GM12878 (cell line): ENCODE measurements at regions of chr3 and their contacts with region 1.

Region 1: DNA sequence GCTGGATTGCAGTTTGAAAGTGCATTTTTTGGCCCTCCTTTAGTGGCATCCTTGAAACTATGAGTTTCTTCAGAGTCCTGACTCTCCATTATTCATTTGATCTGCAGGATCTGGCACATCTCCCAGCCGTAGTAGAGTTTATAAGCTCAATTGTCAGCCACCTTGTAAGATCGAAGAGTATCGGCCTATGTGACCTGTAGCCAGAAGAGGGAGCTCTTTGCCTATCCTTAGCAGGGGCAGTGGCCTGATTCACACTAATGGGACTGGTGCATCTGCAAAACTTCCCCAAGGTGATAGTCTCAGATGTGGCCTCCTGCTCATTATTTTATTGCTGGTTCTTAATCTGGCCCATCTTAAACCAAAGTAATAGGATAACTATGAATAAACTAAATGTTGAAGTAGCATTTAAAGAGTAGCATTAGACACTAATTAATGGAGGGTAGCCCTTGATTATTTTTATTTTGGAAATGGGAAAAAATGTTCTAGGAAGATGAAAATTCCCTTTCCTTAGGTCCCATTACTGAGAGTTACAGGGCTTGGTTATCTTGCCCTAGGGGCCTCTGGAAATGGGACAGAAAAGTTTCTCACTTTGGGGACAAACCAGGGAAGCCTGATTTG is 21.2 kb downstream of the GCSAM start:
- DNase-seq: no peak
- ATAC-seq: peak; percentile 59
- H3K4me3 ChIP-seq: no peak overlapping the region
- H3K27ac ChIP-seq: peak overlapping the region; percentile 95
- H3K4me1 ChIP-seq: peaks cover 46% of the 10 kb centered on the region
- H3K27me3 ChIP-seq: no peaks in the 10 kb centered on the region
- CTCF ChIP-seq: peak; percentile 91 to 98 (median 93); a peak in 5 of 6 replicates
- EP300 ChIP-seq: no peak
- POLR2A ChIP-seq: no peak
- RAD21 ChIP-seq: peak; percentile 100

Region 2: DNA sequence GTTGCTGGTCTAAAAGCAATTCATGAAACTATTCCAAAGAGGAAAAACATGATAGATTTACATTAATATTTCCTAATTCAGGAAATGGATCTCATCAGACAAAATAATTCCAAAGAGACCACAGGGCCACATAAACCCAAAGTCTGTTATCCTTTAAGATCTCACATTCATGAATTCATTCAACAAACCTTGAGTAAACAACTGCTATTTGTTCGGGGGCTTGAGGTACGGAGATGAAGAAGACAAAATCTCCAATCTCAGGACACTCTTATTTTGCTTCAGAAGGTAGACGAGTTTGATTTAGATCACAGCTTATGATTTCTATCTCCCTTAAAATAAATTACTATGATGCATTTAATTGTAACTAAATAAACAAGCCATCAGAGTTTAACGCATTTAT is 46.1 kb before region 1 on chr3:
- CTCF ChIA-PET with region 1: no interaction called
- POLR2A ChIA-PET with region 1: no interaction called
- RAD21 ChIA-PET with region 1: no interaction called
- SMC1A ChIA-PET with region 1: no interaction called
- in situ Hi-C with region 1: no loop called
- intact Hi-C with region 1: no loop called
- DNase-seq: no peak
- ATAC-seq: no peak
- H3K4me3 ChIP-seq: no peak overlapping the region
- H3K27ac ChIP-seq: no peak overlapping the region
- H3K4me1 ChIP-seq: no peaks in the 10 kb centered on the region
- H3K27me3 ChIP-seq: no peaks in the 10 kb centered on the region
- CTCF ChIP-seq: no peak
- EP300 ChIP-seq: no peak
- POLR2A ChIP-seq: no peak
- RAD21 ChIP-seq: no peak

Region 3: GRCh38 chr3:112128843-112129727 is 17.2 kb after region 1 on chr3:
- CTCF ChIA-PET with region 1: interaction called, 226 read pairs
- POLR2A ChIA-PET with region 1: interaction called, 345 read pairs
- RAD21 ChIA-PET with region 1: interaction called, 457 read pairs
- SMC1A ChIA-PET with region 1: interaction called, 489 read pairs
- in situ Hi-C with region 1: no loop called
- intact Hi-C with region 1: loop called (anchors 1 kb)
- DNase-seq: no peak
- ATAC-seq: peak; percentile 60
- H3K4me3 ChIP-seq: peak overlapping the region; percentile 78
- H3K27ac ChIP-seq: peak overlapping the region; percentile 99
- H3K4me1 ChIP-seq: peaks cover 46% of the 10 kb centered on the region
- H3K27me3 ChIP-seq: no peaks in the 10 kb centered on the region
- CTCF ChIP-seq: no peak
- EP300 ChIP-seq: peak in 1 of 2 experiments; percentile 59; a peak in 2 of 4 replicates
- POLR2A ChIP-seq: peak; percentile 66; the same call in 1 of the 2 replicates
- RAD21 ChIP-seq: no peak

Region 4: GRCh38 chr3:112327371-112327951 is 215.6 kb after region 1 on chr3:
- CTCF ChIA-PET with region 1: interaction called, 74 read pairs
- POLR2A ChIA-PET with region 1: interaction called, 5 read pairs
- RAD21 ChIA-PET with region 1: interaction called, 28 read pairs
- SMC1A ChIA-PET with region 1: interaction called, 74 read pairs
- in situ Hi-C with region 1: no loop called
- intact Hi-C with region 1: loop called (anchors 1 kb)
- DNase-seq: peak; percentile 79
- ATAC-seq: peak; percentile 100
- H3K4me3 ChIP-seq: no peak overlapping the region
- H3K27ac ChIP-seq: no peak overlapping the region
- H3K4me1 ChIP-seq: no peaks in the 10 kb centered on the region
- H3K27me3 ChIP-seq: no peaks in the 10 kb centered on the region
- CTCF ChIP-seq: peak; percentile 60 to 82 (median 64)
- EP300 ChIP-seq: no peak
- POLR2A ChIP-seq: no peak
- RAD21 ChIP-seq: peak; percentile 98

Region 5: DNA sequence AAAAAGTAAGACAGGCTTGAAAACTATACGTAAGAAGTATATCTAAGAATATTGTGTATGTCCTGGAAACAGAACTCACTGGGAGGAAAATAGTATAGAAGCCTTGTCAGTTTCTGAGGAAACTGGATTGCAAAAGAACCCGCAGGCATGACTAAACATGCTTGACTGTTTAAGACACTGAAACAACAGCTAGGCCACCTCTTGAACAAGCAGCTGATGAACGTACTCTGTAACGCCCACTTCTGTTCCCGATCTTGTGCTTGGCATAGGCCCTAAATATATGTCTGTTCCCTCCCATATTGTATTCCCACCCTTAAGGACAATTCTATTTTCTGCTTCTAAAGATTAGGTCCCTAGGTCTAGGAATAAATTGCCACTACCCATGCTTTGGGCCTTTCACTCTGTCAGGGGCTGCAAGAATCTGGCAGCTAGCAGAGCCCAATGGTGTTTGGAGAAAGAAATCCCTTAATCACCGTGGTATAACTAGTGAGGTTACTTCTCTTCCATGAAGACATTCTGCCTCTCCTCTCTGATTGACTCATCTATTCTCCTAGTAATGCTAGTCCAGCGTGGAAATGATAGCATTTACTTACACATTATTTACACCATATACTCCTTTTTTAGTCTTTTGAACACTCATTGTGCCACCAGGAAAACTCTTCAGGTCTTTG is 267.3 kb after region 1 on chr3:
- CTCF ChIA-PET with region 1: no interaction called
- POLR2A ChIA-PET with region 1: no interaction called
- RAD21 ChIA-PET with region 1: no interaction called
- SMC1A ChIA-PET with region 1: no interaction called
- in situ Hi-C with region 1: no loop called
- intact Hi-C with region 1: no loop called
- DNase-seq: no peak
- ATAC-seq: no peak
- H3K4me3 ChIP-seq: no peak overlapping the region
- H3K27ac ChIP-seq: no peak overlapping the region
- H3K4me1 ChIP-seq: no peaks in the 10 kb centered on the region
- H3K27me3 ChIP-seq: no peaks in the 10 kb centered on the region
- CTCF ChIP-seq: no peak
- EP300 ChIP-seq: no peak
- POLR2A ChIP-seq: no peak
- RAD21 ChIP-seq: no peak

Region 6: DNA sequence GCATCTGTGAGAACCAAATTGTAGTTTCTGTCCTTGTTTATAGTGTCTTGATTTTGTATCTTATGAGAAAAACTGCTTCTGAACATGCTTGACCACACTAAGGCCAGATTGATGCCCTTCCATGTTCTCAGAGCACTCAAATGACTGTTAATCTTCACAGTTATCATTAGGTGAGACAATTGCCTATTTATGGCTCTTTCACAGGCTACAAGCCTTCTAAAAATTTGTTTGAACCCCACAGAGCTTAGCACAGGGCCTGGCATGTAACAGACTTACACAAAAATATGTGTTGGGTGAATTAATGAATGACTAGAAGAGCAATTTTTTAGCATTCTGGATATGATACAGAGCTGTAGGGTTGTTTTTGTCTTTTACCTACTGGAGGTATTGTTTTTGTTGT is 344.3 kb after region 1 on chr3:
- CTCF ChIA-PET with region 1: interaction called, 6 read pairs
- POLR2A ChIA-PET with region 1: interaction called, 5 read pairs
- RAD21 ChIA-PET with region 1: interaction called, 14 read pairs
- SMC1A ChIA-PET with region 1: interaction called, 5 read pairs
- in situ Hi-C with region 1: loop called (anchors 5 kb)
- intact Hi-C with region 1: loop called (anchors 2 kb)
- DNase-seq: no peak
- ATAC-seq: peak; percentile 46
- H3K4me3 ChIP-seq: no peak overlapping the region
- H3K27ac ChIP-seq: peak overlapping the region; percentile 61
- H3K4me1 ChIP-seq: peaks cover 17% of the 10 kb centered on the region
- H3K27me3 ChIP-seq: no peaks in the 10 kb centered on the region
- CTCF ChIP-seq: no peak
- EP300 ChIP-seq: peak; percentile 59 to 68; a peak in 1 of 4 replicates
- POLR2A ChIP-seq: no peak
- RAD21 ChIP-seq: peak; percentile 21; the same call in 1 of the 2 replicates

Region 7: DNA sequence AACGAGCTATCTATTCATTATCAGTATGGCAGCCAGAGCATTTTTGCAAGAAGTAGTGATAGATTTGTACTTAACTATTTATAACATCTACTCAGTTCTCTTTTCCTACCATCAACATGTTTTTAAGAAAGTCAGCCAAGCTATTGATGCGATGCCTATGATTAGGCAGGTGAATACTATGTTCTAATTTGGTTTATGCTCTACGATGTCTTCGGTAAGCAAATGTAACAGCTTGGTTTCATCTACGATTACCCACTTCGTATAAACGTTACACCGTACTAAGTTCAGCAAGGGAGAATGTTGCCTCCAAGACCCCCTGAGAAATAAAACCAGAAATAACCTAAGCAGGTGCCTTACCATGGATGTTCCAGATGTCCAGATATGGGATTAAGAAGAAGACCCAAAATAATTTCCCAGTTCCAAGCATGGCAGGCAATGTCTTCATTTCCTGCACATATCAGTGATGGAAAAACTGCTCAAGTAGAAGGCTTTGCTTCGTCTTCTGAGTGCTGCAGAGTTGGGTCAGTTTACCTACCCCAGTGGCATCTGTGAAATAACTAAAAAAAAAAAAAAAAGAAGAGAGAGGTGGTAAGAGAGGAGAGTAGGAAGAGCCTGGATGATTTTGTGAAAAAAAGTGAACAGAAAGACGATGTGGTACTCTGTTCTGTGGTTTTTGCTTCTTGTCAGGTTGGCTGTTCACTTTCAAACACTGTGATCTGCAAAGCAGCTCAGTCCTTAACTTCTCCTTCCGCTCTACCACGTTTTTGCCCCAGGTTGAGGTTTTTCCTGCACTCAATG is 387.2 kb after region 1 on chr3 and contains the start of gene BTLA:
- CTCF ChIA-PET with region 1: interaction called, 8 read pairs
- POLR2A ChIA-PET with region 1: interaction called, 9 read pairs
- RAD21 ChIA-PET with region 1: interaction called, 46 read pairs
- SMC1A ChIA-PET with region 1: interaction called, 14 read pairs
- in situ Hi-C with region 1: no loop called
- intact Hi-C with region 1: no loop called
- DNase-seq: peak; percentile 79
- ATAC-seq: peak; percentile 64
- H3K4me3 ChIP-seq: peak within 1 kb of the TSS; percentile 89
- H3K27ac ChIP-seq: peak within 1 kb of the TSS; percentile 87
- H3K4me1 ChIP-seq: peaks cover 13% of the 10 kb centered on the region
- H3K27me3 ChIP-seq: no peaks in the 10 kb centered on the region
- CTCF ChIP-seq: no peak
- EP300 ChIP-seq: peak in 1 of 2 experiments; percentile 39; a peak in 1 of 4 replicates
- POLR2A ChIP-seq: peak; percentile 52; the same call in 1 of the 2 replicates
- RAD21 ChIP-seq: no peak
- polyA plus RNA-seq, gene BTLA: 101 to 134 TPM

Region 8: GRCh38 chr3:112531358-112531781 is 419.5 kb after region 1 on chr3:
- CTCF ChIA-PET with region 1: interaction called, 18 read pairs
- POLR2A ChIA-PET with region 1: no interaction called
- RAD21 ChIA-PET with region 1: interaction called, 13 read pairs
- SMC1A ChIA-PET with region 1: interaction called, 12 read pairs
- in situ Hi-C with region 1: no loop called
- intact Hi-C with region 1: loop called (anchors 2 kb)
- DNase-seq: no peak
- ATAC-seq: peak; percentile 39; the same call in 2 of the 3 replicates
- H3K4me3 ChIP-seq: no peak overlapping the region
- H3K27ac ChIP-seq: no peak overlapping the region
- H3K4me1 ChIP-seq: no peaks in the 10 kb centered on the region
- H3K27me3 ChIP-seq: no peaks in the 10 kb centered on the region
- CTCF ChIP-seq: peak; percentile 21 to 43 (median 41); a peak in 3 of 6 replicates
- EP300 ChIP-seq: no peak
- POLR2A ChIP-seq: no peak
- RAD21 ChIP-seq: peak; percentile 36; the same call in 1 of the 2 replicates